ENCODE measurements at regions of chr13 and their contacts with region 1.

Region 1: GRCh38 chr13:96238861-96239626 is 149.1 kb downstream of the HS6ST3 start:
- DNase-seq: no peak
- CTCF ChIP-seq: no peak

Region 2: DNA sequence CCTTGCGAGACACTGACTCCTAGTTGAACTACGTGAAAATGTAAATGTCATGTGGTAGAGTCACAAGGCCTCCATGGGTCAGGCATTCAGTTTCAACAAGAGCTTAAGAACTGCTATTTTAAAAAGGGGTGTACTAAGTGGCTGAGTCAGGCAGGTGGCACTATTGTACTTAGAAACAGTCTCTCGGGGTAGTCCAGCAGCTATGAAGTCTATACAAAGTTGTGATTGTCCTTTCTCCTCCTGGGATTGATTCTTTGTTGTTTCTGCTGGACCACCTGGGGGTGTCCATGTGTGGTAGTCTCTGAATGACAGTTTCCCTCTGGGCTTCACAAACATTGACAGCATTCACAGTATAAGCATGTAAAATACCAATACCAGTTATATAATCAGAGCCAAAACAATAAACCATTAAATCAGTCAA is 218.9 kb before region 1 on chr13:
- in situ Hi-C with region 1: loop called (anchors 10 kb)
- DNase-seq: peak; percentile 52
- CTCF ChIP-seq: peak; percentile 63

Region 3: DNA sequence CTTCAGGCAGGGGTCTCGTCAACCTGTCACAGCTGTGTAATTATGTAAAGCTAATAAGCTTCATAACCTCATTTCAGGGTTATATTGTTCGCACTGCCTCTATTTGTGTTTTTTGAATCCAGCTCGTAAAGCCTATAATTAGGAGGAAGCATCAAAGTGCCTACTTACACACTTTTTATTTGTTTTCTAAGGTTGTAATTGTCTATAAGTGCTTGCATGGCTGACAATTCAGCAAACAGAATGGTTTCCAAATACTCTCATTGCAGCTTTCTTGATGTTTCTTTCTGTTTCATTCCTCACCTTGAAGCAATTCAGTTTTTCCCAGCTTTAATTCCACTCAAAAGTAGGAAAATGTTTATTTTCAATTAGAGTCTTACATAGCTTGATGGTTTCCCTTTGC is 187.1 kb after region 1 on chr13:
- in situ Hi-C with region 1: no loop called
- DNase-seq: no peak
- CTCF ChIP-seq: no peak